Activated naive CD4-positive, alpha-beta T cell treated with anti-CD3 and anti-CD28 coated beads for 36 hours (primary cell): ENCODE measurements at regions of chr11 and their contacts with region 1.

Region 1: GRCh38 chr11:120952461-120953434 is 71.2 kb upstream of the TBCEL start:
- DNase-seq: peak; percentile 84
- H3K4me3 Mint-ChIP-seq: peak overlapping the region; percentile 48
- H3K27ac Mint-ChIP-seq: peak overlapping the region; percentile 37
- H3K4me1 Mint-ChIP-seq: peaks cover 18% of the 10 kb centered on the region
- H3K27me3 Mint-ChIP-seq: peaks cover 19% of the 10 kb centered on the region

Region 2: GRCh38 chr11:120682866-120683265 is 269.9 kb before region 1 on chr11:
- CTCF ChIA-PET with region 1: no interaction called
- intact Hi-C with region 1: loop called (anchors 2 kb)
- DNase-seq: no peak
- H3K4me3 Mint-ChIP-seq: no peak overlapping the region
- H3K27ac Mint-ChIP-seq: no peak overlapping the region
- H3K4me1 Mint-ChIP-seq: no peaks in the 10 kb centered on the region
- H3K27me3 Mint-ChIP-seq: peaks cover 18% of the 10 kb centered on the region

Region 3: DNA sequence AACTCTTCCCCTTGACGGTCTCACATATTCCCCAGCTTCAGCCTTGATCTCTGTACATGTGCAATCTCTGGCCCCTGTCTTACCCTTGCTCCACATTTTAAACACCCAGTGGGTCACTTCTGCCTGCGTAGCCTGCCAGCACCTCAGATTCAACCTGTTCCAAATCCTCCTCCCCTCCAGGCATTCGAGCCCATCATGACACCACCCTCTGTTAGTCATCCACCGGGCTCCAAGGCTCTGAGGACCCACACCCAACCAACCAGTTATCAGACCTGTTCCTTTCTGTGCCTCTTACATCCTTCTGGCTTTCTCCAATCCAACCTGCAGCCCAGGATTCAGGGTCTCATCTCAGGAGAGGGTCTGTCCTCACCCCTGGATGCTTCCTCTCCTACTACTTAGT is 48.6 kb before region 1 on chr11:
- CTCF ChIA-PET with region 1: no interaction called
- intact Hi-C with region 1: no loop called
- DNase-seq: no peak
- H3K4me3 Mint-ChIP-seq: no peak overlapping the region
- H3K27ac Mint-ChIP-seq: no peak overlapping the region
- H3K4me1 Mint-ChIP-seq: no peaks in the 10 kb centered on the region
- H3K27me3 Mint-ChIP-seq: peaks cover 2% of the 10 kb centered on the region

Region 4: GRCh38 chr11:120929664-120930154 is 23.0 kb before region 1 on chr11:
- CTCF ChIA-PET with region 1: interaction called, 10 read pairs
- intact Hi-C with region 1: no loop called
- DNase-seq: peak; percentile 64
- H3K4me3 Mint-ChIP-seq: no peak overlapping the region
- H3K27ac Mint-ChIP-seq: no peak overlapping the region
- H3K4me1 Mint-ChIP-seq: no peaks in the 10 kb centered on the region
- H3K27me3 Mint-ChIP-seq: peaks cover 2% of the 10 kb centered on the region

Region 5: DNA sequence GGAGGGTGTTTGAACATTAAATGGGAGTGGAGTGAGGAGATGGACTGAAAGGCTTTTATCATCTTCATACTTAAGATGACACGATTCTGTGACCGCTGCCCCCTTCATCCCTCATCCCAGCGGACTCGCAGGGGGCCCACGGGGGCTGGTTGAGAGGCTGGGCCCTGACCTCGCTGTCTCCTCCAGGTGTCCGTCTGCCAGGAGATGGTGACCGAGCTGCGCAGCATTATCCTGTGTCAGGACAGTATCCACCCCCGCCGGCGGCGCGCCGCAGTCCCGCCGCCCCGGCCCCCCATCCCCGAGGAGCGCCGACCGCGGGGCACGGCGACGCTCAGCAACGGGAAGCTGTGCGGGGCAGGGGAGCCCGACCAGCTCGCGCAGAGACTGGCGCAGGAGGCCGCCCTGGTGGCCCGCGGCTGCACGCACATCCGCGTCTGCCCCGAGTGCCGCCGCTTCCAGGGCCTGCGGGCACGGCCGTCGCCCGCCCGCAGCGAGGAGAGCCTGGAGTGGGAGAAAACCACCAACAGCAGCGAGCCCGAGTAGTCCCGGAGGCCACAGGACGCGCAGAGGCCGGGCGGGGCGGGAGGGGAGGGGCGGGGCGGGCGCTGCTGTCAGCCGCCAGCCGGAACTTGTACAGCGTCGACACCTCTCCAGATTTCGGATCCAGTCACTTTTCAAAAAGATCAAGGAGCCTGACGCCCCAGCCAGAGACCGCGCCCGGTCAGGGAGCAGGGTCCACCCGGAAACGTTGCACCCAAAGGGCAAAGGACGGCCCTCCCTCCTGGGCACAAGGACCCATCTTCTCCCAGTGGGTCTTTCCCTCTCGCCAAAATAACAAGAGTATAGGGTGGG is 33.2 kb after region 1 on chr11:
- CTCF ChIA-PET with region 1: no interaction called
- intact Hi-C with region 1: loop called (anchors 2 kb)
- DNase-seq: peak; percentile 61
- H3K4me3 Mint-ChIP-seq: peak overlapping the region; percentile 53
- H3K27ac Mint-ChIP-seq: no peak overlapping the region
- H3K4me1 Mint-ChIP-seq: peaks cover 11% of the 10 kb centered on the region
- H3K27me3 Mint-ChIP-seq: peaks cover 3% of the 10 kb centered on the region

Region 6: DNA sequence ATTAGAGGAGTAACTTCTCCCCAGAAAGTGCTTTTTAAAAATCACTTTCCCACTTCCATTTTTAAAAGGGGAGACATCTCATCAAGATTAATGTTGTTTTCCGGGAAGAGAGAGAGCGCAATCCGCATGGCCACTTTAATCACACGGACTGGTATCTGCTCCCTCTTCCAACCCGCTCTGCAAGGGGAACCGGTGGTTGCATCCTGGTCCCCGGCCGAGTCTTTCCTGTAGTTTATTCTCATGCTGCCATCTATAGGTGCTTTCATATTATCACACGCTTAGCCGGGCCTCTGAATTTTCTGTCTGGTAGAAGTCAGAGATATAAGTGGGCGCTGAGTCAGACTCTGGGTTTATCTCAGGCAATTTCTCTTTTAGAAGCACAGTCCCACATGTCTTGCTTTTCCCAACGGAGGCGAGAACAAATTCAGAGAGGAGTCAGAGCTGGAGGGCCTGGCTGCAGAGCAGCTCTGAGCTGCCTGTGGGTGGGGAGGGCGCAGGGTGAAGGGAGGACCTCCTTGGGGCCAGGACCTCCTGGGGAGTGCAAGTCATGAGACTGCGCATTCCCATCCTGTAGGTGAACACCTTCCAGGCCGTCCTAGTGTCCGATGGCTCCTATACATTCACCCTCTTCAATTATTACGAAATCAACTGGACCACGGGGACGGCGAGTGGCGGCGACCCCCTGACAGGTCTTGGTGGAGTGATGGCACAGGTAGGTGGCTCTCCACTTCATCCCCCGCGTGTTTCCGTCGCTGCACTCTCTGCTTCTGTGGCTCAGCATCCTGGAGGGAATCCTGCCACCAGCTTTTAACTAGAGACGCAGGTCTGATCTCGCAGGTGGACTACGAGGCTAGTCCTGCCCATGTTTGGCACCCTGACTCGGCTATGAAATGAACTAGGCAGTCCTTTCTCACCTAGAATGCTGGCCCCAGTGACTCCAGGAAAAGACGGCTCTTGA is 160.0 kb after region 1 on chr11:
- CTCF ChIA-PET with region 1: interaction called, 3 read pairs
- intact Hi-C with region 1: loop called (anchors 1 kb)
- DNase-seq: peak; percentile 64
- H3K4me3 Mint-ChIP-seq: no peak overlapping the region
- H3K27ac Mint-ChIP-seq: no peak overlapping the region
- H3K4me1 Mint-ChIP-seq: no peaks in the 10 kb centered on the region
- H3K27me3 Mint-ChIP-seq: peaks cover 12% of the 10 kb centered on the region

Region 7: DNA sequence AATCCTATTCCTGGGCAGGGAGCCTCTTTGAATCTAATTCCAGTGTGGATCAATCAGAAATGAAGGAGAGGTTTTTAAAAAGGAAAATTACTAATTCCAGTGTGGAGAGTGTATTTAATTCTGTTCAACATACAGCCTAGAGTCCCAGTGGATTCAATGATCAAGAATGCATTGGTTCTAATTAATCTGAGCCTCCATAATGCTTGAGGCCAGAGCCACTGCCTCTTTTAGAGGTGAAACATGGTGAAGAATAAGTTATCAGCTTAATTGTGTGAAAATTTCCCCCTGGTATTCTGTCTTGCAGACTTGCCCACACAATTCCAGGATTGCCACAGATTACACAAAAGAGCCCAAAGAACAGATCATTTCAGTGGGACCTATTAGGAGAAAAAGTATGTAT is 236.0 kb after region 1 on chr11:
- CTCF ChIA-PET with region 1: no interaction called
- intact Hi-C with region 1: no loop called
- DNase-seq: no peak
- H3K4me3 Mint-ChIP-seq: no peak overlapping the region
- H3K27ac Mint-ChIP-seq: no peak overlapping the region
- H3K4me1 Mint-ChIP-seq: no peaks in the 10 kb centered on the region
- H3K27me3 Mint-ChIP-seq: peaks cover 13% of the 10 kb centered on the region

Region 8: DNA sequence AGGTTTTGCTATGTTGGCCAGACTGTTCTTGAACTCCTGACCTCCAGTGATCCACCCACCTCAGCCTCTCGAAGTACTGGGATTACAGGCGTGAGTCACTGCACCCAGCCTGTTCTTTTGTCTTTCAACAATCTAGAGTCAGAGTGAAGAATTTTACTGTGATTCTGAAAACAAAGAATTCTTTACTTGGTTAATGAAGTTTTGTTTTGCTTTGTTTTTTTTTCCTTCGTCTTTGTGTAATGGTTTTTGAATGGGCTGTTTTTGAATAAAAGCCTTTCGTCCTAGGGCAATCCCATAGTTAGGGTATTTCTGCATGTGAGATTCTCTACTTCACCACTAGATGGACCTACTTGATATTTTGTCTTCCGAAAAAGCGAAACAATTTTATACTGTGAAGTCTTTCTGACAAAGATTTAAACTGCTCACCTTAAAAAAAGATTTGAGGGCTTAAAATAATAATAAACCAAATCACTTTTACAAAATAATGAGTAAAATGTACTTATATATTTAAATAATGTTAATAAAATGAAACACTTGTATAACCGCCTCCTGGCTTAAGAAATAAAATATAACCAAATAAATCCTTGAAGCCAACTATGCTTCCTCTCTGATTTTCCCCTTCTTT is 296.4 kb after region 1 on chr11:
- CTCF ChIA-PET with region 1: no interaction called
- intact Hi-C with region 1: no loop called
- DNase-seq: no peak
- H3K4me3 Mint-ChIP-seq: no peak overlapping the region
- H3K27ac Mint-ChIP-seq: no peak overlapping the region
- H3K4me1 Mint-ChIP-seq: no peaks in the 10 kb centered on the region
- H3K27me3 Mint-ChIP-seq: no peaks in the 10 kb centered on the region